SK-N-SH (cell line): ENCODE measurements at regions of chr6 and their contacts with region 1.

Region 1: DNA sequence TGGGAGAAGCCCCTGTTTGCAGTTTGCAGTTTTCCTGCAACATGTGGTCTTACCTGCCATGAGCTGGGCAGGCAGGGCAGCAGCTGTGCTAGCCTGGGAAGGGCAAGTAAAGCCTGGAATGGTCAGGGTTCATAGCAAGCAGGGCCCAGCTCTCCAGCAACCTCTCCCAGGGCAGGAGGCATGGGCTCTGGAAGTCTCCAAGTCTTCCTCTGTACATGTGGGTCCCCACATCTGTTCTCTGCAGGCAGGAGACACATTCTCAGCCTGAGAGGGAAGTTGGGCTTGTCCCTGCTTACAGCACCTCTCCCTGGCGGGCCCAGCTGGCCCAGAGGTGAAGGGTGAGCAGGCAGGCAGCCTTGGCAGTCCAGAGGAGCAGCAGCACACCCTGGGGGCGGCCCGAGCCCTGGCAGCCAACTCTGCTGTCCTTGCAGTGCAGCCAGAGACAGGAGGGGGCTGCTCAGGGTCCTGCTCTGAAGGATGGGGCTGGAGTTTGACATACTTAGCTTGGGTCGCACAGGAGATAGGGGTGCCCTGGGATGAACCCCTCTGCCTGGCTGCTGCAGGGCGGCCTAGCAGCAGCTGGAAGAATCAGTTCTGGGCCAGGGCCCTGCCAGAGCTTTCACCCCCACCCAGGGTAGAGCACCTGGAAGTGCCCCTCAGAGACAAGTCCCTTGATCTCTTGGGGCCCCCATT is 176.0 kb downstream of the MRPL14 start:
- DNase-seq: peak; percentile 83
- H3K4me3 ChIP-seq: no peak overlapping the region
- H3K27ac ChIP-seq: peak overlapping the region in 1 of 2 experiments; percentile 87; a peak in 2 of 4 replicates
- H3K4me1 ChIP-seq: peaks cover 0 to 47% of the 10 kb centered on the region in 2 experiments; a peak in 1 of 4 replicates
- H3K27me3 ChIP-seq: no peaks in the 10 kb centered on the region
- CTCF ChIP-seq: peak; percentile 34
- EP300 ChIP-seq: no peak; a peak in 2 of 4 replicates
- RAD21 ChIP-seq: peak; percentile 89

Region 2: GRCh38 chr6:43667245-43668150 is 283.7 kb before region 1 on chr6:
- CTCF ChIA-PET with region 1: interaction called, 73 read pairs
- POLR2A ChIA-PET with region 1: no interaction called
- DNase-seq: peak; percentile 88
- H3K4me3 ChIP-seq: peak overlapping the region in 1 of 2 experiments; percentile 33; a peak in 2 of 4 replicates
- H3K27ac ChIP-seq: peak overlapping the region in 1 of 2 experiments; percentile 31; a peak in 1 of 4 replicates
- H3K4me1 ChIP-seq: peaks cover 0 to 29% of the 10 kb centered on the region in 2 experiments; a peak in 1 of 4 replicates
- H3K27me3 ChIP-seq: no peaks in the 10 kb centered on the region
- CTCF ChIP-seq: peak; percentile 89
- EP300 ChIP-seq: no peak
- RAD21 ChIP-seq: peak; percentile 86

Region 3: GRCh38 chr6:43695215-43695966 is 255.8 kb before region 1 on chr6:
- CTCF ChIA-PET with region 1: no interaction called
- POLR2A ChIA-PET with region 1: no interaction called
- DNase-seq: no peak
- H3K4me3 ChIP-seq: no peak overlapping the region
- H3K27ac ChIP-seq: no peak overlapping the region
- H3K4me1 ChIP-seq: peaks cover 0 to 10% of the 10 kb centered on the region in 2 experiments; a peak in 1 of 4 replicates
- H3K27me3 ChIP-seq: no peaks in the 10 kb centered on the region
- CTCF ChIP-seq: no peak
- EP300 ChIP-seq: no peak
- RAD21 ChIP-seq: no peak

Region 4: GRCh38 chr6:43781941-43782704 is 169.1 kb before region 1 on chr6:
- CTCF ChIA-PET with region 1: interaction called, 140 read pairs
- POLR2A ChIA-PET with region 1: interaction called, 6 read pairs
- DNase-seq: no peak
- H3K4me3 ChIP-seq: no peak overlapping the region
- H3K27ac ChIP-seq: no peak overlapping the region
- H3K4me1 ChIP-seq: peaks cover 0 to 53% of the 10 kb centered on the region in 2 experiments; a peak in 1 of 4 replicates
- H3K27me3 ChIP-seq: no peaks in the 10 kb centered on the region
- CTCF ChIP-seq: no peak
- EP300 ChIP-seq: no peak
- RAD21 ChIP-seq: no peak

Region 5: DNA sequence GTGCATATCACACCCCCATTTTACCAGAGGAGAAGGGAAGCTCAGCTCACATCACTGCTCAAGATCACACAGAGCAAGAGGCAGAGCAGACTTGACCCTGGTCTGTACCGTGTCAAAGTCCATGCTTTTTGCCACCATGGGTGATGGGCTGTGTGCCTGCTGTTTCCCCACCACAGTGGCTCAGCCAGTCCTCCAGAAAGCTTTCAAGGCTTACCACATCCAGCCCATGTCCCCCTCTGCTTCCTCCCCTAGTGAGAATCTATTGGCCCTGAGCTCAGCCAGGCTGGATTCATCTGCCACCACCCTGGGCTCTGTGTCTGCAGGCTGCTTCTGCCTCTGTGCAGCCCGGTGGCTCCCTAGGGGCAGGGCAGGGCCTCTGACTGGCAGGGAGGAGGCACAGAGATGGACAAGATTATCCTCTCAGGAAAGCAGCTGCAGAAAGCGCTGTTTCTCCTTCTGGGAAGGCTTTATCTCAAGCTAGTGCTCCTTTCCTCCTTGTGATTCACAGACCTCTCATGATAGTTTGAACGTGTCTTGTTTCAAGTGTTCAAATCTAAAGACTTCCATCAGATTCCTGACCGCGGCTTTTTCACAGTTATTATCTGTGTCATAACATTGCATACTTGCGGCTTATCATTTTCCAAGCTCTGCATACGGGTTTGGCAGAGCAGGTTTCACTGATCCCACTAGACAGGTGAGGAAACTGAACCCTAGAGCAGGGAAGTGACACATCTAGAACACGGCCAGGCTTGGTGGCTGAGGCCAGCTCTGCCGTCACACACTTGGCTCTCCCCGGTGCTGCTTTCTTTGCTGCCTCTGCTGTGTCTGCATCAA is 143.8 kb before region 1 on chr6:
- CTCF ChIA-PET with region 1: interaction called, 10 read pairs
- POLR2A ChIA-PET with region 1: no interaction called
- DNase-seq: peak; percentile 68
- H3K4me3 ChIP-seq: no peak overlapping the region
- H3K27ac ChIP-seq: peak overlapping the region in 1 of 2 experiments; percentile 67; a peak in 2 of 4 replicates
- H3K4me1 ChIP-seq: peaks cover 0 to 33% of the 10 kb centered on the region in 2 experiments; a peak in 1 of 4 replicates
- H3K27me3 ChIP-seq: no peaks in the 10 kb centered on the region
- CTCF ChIP-seq: no peak
- EP300 ChIP-seq: no peak
- RAD21 ChIP-seq: no peak

Region 6: DNA sequence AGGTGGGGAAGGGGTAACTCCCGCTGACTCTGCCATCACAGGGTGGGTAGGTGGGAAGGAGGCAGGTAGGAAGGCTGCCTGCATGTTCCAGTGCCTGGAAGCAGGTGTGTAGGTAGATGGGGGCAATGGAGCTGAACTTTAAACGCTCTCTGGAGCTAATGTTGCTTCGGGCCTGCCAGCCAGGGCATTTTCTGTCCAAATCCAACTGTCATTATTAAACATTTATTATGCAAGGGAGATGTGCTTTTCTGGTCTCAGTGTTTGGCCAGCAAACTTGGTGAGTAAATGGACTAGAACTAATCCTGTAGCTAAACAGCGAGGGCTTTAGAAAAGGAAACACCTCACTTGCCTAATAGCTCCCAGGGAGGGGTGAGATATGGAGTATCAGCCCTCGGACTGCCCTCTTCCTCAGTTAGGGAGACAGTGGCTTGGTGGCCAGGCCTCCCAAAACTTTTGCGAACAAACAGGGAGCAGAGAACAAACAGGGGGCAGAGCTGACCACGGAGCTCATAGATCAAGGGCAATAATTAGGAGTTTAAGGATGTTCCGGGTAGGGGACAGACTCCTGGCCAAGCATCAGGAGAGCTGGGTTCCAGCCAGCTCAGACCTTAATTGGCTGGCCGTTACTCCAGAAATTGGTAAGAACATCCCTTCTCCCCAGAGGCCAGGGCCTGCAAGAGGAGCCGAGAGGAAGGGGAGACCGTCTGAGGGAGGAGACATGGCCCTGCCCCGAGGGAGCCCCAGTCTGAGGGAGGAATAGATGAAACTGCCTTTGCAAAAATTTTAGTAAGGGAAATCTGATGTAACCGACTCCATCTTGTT is 50.1 kb before region 1 on chr6:
- CTCF ChIA-PET with region 1: interaction called, 11 read pairs
- POLR2A ChIA-PET with region 1: no interaction called
- DNase-seq: no peak
- H3K4me3 ChIP-seq: no peak overlapping the region
- H3K27ac ChIP-seq: peak overlapping the region in 1 of 2 experiments; percentile 91; a peak in 2 of 4 replicates
- H3K4me1 ChIP-seq: peaks cover 0 to 61% of the 10 kb centered on the region in 2 experiments; a peak in 2 of 4 replicates
- H3K27me3 ChIP-seq: no peaks in the 10 kb centered on the region
- CTCF ChIP-seq: no peak
- EP300 ChIP-seq: no peak
- RAD21 ChIP-seq: no peak

Region 7: GRCh38 chr6:43972913-43973300 is 21.7 kb after region 1 on chr6:
- CTCF ChIA-PET with region 1: interaction called, 13 read pairs
- POLR2A ChIA-PET with region 1: no interaction called
- DNase-seq: no peak
- H3K4me3 ChIP-seq: no peak overlapping the region
- H3K27ac ChIP-seq: peak overlapping the region; percentile 42 to 81
- H3K4me1 ChIP-seq: peaks cover 9 to 43% of the 10 kb centered on the region in 2 experiments; a peak in 3 of 4 replicates
- H3K27me3 ChIP-seq: no peaks in the 10 kb centered on the region
- CTCF ChIP-seq: no peak
- EP300 ChIP-seq: no peak
- RAD21 ChIP-seq: no peak

Region 8: GRCh38 chr6:44002593-44003344 is 51.6 kb after region 1 on chr6:
- CTCF ChIA-PET with region 1: interaction called, 20 read pairs
- POLR2A ChIA-PET with region 1: no interaction called
- DNase-seq: peak; percentile 72
- H3K4me3 ChIP-seq: no peak overlapping the region
- H3K27ac ChIP-seq: no peak overlapping the region
- H3K4me1 ChIP-seq: peaks cover 11 to 39% of the 10 kb centered on the region in 2 experiments; a peak in 3 of 4 replicates
- H3K27me3 ChIP-seq: no peaks in the 10 kb centered on the region
- CTCF ChIP-seq: no peak
- EP300 ChIP-seq: no peak
- RAD21 ChIP-seq: no peak

Region 9: DNA sequence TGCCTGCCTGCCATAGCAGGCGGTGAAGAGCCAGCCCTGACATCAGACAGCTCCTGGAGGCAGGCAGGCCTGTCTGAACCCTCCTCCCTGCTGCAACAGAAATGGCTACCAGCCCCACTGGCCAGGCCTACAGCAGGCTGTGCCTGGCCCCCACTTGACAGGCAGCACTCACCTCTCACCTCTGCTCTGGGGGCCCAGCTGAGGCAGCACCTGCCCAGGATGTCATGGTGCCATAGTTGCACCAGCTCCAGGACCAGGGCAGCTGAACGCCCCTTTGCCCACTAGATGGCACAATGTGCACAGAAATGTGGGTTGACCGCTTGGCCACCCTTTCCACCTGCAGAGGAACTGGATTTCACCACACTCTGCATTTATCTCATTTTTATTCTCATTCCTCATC is 145.4 kb after region 1 on chr6:
- CTCF ChIA-PET with region 1: no interaction called
- POLR2A ChIA-PET with region 1: no interaction called
- DNase-seq: peak; percentile 86
- H3K4me3 ChIP-seq: peak overlapping the region in 1 of 2 experiments; percentile 39; a peak in 1 of 4 replicates
- H3K27ac ChIP-seq: no peak overlapping the region
- H3K4me1 ChIP-seq: no peaks in the 10 kb centered on the region; a peak in 1 of 4 replicates
- H3K27me3 ChIP-seq: no peaks in the 10 kb centered on the region
- CTCF ChIP-seq: peak; percentile 78
- EP300 ChIP-seq: no peak
- RAD21 ChIP-seq: peak; percentile 95